Activated CD4-positive, alpha-beta T cell treated with anti-CD3 and anti-CD28 coated beads for 36 hours (primary cell): ENCODE measurements at regions of chr5 and their contacts with region 1.

Region 1: GRCh38 chr5:79990598-79991507 is at the start of gene MTX3:
- DNase-seq: peak; percentile 94
- ATAC-seq: peak; percentile 84
- H3K4me3 Mint-ChIP-seq: peak within 1 kb of the TSS; percentile 89
- H3K27ac Mint-ChIP-seq: peak within 1 kb of the TSS; percentile 98
- H3K4me1 Mint-ChIP-seq: peaks cover 49% of the 10 kb centered on the region
- H3K27me3 Mint-ChIP-seq: peaks cover 2% of the 10 kb centered on the region
- total RNA-seq, gene MTX3: 11.9 to 14.3 TPM

Region 2: GRCh38 chr5:78984439-78985115 is 1006.3 kb before region 1 on chr5:
- CTCF ChIA-PET with region 1: no interaction called
- POLR2A ChIA-PET with region 1: interaction called, 3 read pairs
- intact Hi-C with region 1: loop called in 1 of 2 experiments (anchors 10 kb)
- DNase-seq: peak; percentile 86
- ATAC-seq: peak; percentile 72
- H3K4me3 Mint-ChIP-seq: peak overlapping the region; percentile 82
- H3K27ac Mint-ChIP-seq: peak overlapping the region; percentile 88
- H3K4me1 Mint-ChIP-seq: peaks cover 40% of the 10 kb centered on the region
- H3K27me3 Mint-ChIP-seq: no peaks in the 10 kb centered on the region

Region 3: GRCh38 chr5:79560771-79561524 is 429.9 kb before region 1 on chr5:
- CTCF ChIA-PET with region 1: no interaction called
- POLR2A ChIA-PET with region 1: no interaction called
- intact Hi-C with region 1: loop called (anchors 1 kb)
- DNase-seq: peak; percentile 61
- ATAC-seq: peak; percentile 86
- H3K4me3 Mint-ChIP-seq: peak overlapping the region; percentile 34
- H3K27ac Mint-ChIP-seq: peak overlapping the region; percentile 99
- H3K4me1 Mint-ChIP-seq: peaks cover 44% of the 10 kb centered on the region
- H3K27me3 Mint-ChIP-seq: no peaks in the 10 kb centered on the region

Region 4: GRCh38 chr5:79962575-79963222 is 28.2 kb before region 1 on chr5:
- CTCF ChIA-PET with region 1: no interaction called
- POLR2A ChIA-PET with region 1: interaction called, 3 read pairs
- intact Hi-C with region 1: loop called (anchors 1 kb)
- DNase-seq: peak; percentile 83
- ATAC-seq: peak; percentile 89
- H3K4me3 Mint-ChIP-seq: peak overlapping the region; percentile 15
- H3K27ac Mint-ChIP-seq: peak overlapping the region; percentile 93
- H3K4me1 Mint-ChIP-seq: peaks cover 32% of the 10 kb centered on the region
- H3K27me3 Mint-ChIP-seq: peaks cover 14% of the 10 kb centered on the region

Region 5: GRCh38 chr5:80125962-80126480 is 135.2 kb after region 1 on chr5:
- CTCF ChIA-PET with region 1: no interaction called
- POLR2A ChIA-PET with region 1: no interaction called
- intact Hi-C with region 1: loop called in 1 of 2 experiments (anchors 1 kb)
- DNase-seq: peak; percentile 33
- ATAC-seq: peak; percentile 92
- H3K4me3 Mint-ChIP-seq: peak overlapping the region; percentile 44
- H3K27ac Mint-ChIP-seq: peak overlapping the region; percentile 61
- H3K4me1 Mint-ChIP-seq: peaks cover 50% of the 10 kb centered on the region
- H3K27me3 Mint-ChIP-seq: no peaks in the 10 kb centered on the region

Region 6: GRCh38 chr5:80382488-80382887 is 391.6 kb after region 1 on chr5:
- CTCF ChIA-PET with region 1: no interaction called
- POLR2A ChIA-PET with region 1: no interaction called
- intact Hi-C with region 1: no loop called
- DNase-seq: no peak
- ATAC-seq: no peak
- H3K4me3 Mint-ChIP-seq: no peak overlapping the region
- H3K27ac Mint-ChIP-seq: no peak overlapping the region
- H3K4me1 Mint-ChIP-seq: no peaks in the 10 kb centered on the region
- H3K27me3 Mint-ChIP-seq: no peaks in the 10 kb centered on the region

Region 7: DNA sequence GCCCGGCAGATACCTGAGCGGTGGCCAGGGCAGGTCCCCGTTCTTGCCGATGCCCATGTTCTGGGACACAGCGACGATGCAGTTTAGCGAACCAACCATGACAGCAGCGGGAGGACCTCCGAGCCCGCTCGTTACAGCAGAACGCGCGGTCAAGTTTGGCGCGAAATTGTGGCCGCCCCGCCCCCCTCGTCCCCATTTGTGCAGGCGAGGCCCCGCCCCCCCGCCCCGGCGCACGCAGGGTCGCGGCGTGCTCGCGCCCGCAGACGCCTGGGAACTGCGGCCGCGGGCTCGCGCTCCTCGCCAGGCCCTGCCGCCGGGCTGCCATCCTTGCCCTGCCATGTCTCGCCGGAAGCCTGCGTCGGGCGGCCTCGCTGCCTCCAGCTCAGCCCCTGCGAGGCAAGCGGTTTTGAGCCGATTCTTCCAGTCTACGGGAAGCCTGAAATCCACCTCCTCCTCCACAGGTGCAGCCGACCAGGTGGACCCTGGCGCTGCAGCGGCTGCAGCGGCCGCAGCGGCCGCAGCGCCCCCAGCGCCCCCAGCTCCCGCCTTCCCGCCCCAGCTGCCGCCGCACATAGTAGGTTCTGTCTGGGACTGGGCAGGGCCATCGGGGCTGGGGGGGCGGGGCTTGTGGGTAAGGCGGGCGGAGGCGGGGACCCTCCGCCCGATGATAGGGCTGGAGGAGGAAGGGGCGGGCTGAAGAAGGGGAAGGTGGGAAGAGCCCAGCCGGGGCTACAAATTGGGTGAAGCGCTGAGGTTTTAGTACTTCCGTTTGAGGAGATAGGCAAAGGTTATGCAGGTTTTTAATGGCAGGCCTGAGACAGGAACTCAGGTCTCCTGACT is 663.8 kb after region 1 on chr5 and contains the starts of genes DHFR and MSH3:
- CTCF ChIA-PET with region 1: no interaction called
- POLR2A ChIA-PET with region 1: no interaction called
- intact Hi-C with region 1: loop called in 1 of 2 experiments (anchors 2 kb)
- DNase-seq: peak; percentile 95
- ATAC-seq: peak; percentile 69
- H3K4me3 Mint-ChIP-seq: peak within 1 kb of the TSS; percentile 94
- H3K27ac Mint-ChIP-seq: peak within 1 kb of the TSS; percentile 99
- H3K4me1 Mint-ChIP-seq: peaks cover 21% of the 10 kb centered on the region
- H3K27me3 Mint-ChIP-seq: no peaks in the 10 kb centered on the region
- total RNA-seq, gene DHFR: 105 to 107 TPM
- total RNA-seq, gene MSH3: 25.6 to 27.1 TPM